Activated CD4-positive, alpha-beta memory T cell treated with anti-CD3 and anti-CD28 coated beads for 36 hours (primary cell): ENCODE measurements at regions of chr6 and their contacts with region 1.

Region 1: DNA sequence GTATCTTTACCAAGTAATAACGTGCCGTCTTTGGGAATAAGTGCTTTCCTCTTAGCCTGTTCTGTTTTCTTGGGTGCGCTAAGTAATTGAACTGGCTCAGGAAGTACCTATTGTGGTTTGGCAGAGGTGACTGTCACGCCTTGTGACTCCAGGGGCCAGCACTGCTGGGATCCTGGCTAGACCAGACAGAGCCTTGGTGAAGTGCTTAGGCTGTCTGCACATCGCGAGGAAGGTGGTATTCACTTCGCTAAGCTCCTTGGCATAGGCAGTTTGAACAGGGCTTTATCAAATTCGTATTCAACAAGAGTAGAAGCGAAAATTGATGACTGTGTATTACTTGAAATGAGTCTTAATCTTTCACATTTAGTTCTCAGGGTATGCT is 17.6 kb downstream of the PRDM1 start:
- DNase-seq: peak; percentile 71
- H3K4me3 Mint-ChIP-seq: peak overlapping the region; percentile 91
- H3K27ac Mint-ChIP-seq: peak overlapping the region; percentile 96
- H3K4me1 Mint-ChIP-seq: peaks cover 79% of the 10 kb centered on the region
- H3K27me3 Mint-ChIP-seq: no peaks in the 10 kb centered on the region

Region 2: GRCh38 chr6:105909106-105909505 is 194.6 kb before region 1 on chr6:
- CTCF ChIA-PET with region 1: no interaction called
- POLR2A ChIA-PET with region 1: no interaction called
- intact Hi-C with region 1: no loop called
- DNase-seq: no peak
- H3K4me3 Mint-ChIP-seq: no peak overlapping the region
- H3K27ac Mint-ChIP-seq: no peak overlapping the region
- H3K4me1 Mint-ChIP-seq: no peaks in the 10 kb centered on the region
- H3K27me3 Mint-ChIP-seq: peaks cover 2% of the 10 kb centered on the region

Region 3: DNA sequence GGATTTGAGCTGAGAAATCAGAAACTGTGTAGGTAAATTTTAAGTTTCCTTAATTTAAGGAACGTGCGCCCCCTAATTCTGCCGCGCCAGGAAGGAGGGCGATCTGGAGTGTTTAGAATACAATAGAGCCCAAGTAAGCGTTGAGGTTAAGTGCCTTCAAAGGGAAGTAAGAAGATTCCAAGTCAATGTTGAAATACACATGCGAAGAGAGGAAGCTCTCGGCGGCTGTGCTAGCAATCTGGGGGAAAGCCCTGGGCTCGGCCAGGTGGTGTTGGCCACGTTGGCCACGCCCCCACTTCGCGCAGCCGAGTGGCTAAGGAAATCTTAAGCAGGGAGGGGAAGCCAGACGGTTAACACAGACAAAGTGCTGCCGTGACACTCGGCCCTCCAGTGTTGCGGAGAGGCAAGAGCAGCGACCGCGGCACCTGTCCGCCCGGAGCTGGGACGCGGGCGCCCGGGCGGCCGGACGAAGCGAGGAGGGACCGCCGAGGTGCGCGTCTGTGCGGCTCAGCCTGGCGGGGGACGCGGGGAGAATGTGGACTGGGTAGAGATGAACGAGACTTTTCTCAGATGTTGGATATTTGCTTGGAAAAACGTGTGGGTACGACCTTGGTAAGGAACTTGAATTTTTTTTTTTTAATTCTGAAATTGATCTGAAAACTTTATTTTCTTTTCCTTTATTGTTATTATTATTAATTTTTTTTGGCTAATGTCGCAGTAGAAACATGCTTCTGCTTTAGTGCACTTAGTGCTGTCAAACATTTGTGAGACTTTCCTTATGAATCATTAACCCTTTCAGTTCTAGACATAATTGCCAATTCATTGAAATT is 17.5 kb before region 1 on chr6 and contains the start of gene PRDM1:
- CTCF ChIA-PET with region 1: interaction called, 38 read pairs
- POLR2A ChIA-PET with region 1: interaction called, 236 read pairs
- intact Hi-C with region 1: loop called (anchors 1 kb)
- DNase-seq: peak; percentile 89
- H3K4me3 Mint-ChIP-seq: peak within 1 kb of the TSS; percentile 90
- H3K27ac Mint-ChIP-seq: peak within 1 kb of the TSS; percentile 94
- H3K4me1 Mint-ChIP-seq: peaks cover 73% of the 10 kb centered on the region
- H3K27me3 Mint-ChIP-seq: peaks cover 2% of the 10 kb centered on the region
- total RNA-seq, gene PRDM1: 70.9 to 78.9 TPM

Region 4: DNA sequence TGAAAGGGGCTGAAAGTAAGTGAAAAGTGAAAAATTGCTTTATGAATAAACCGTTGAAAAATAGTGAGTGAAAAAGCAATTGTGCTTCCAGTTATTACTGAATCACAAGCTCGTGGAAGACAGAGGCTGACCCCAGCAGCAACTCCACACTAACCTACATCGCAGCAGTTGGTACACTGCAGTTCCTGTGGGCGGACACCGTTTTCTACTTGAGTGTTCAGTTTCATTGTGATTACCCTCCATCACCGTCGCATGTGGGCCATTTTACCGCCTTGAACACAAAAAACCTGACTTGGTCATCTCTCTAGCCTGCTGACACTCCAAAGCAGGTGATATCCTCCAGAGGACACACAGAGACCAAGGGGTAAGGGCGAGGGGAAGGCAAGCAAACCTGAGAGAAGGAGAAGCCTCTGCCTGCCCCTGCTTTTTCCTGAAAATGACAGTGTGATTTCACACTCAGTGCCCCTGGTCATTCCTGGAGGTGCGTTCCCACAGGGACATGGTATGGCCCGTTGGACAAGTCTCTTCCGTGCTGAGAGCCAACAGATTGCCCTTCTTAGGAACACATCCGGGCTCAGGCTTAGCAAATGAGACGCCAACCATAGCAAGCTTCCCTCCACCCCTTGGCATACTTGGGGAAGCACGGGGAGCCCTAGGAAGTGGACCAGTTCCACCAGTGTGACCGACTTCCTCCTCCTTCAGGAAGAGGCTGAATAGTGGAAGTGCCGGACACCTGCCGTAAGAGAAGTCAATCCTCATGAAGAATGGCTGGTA is 11.0 kb after region 1 on chr6:
- CTCF ChIA-PET with region 1: interaction called, 9 read pairs
- POLR2A ChIA-PET with region 1: interaction called, 25 read pairs
- intact Hi-C with region 1: loop called (anchors 1 kb)
- DNase-seq: peak; percentile 92
- H3K4me3 Mint-ChIP-seq: peak overlapping the region; percentile 25
- H3K27ac Mint-ChIP-seq: peak overlapping the region; percentile 75
- H3K4me1 Mint-ChIP-seq: peaks cover 92% of the 10 kb centered on the region
- H3K27me3 Mint-ChIP-seq: peaks cover 8% of the 10 kb centered on the region

Region 5: DNA sequence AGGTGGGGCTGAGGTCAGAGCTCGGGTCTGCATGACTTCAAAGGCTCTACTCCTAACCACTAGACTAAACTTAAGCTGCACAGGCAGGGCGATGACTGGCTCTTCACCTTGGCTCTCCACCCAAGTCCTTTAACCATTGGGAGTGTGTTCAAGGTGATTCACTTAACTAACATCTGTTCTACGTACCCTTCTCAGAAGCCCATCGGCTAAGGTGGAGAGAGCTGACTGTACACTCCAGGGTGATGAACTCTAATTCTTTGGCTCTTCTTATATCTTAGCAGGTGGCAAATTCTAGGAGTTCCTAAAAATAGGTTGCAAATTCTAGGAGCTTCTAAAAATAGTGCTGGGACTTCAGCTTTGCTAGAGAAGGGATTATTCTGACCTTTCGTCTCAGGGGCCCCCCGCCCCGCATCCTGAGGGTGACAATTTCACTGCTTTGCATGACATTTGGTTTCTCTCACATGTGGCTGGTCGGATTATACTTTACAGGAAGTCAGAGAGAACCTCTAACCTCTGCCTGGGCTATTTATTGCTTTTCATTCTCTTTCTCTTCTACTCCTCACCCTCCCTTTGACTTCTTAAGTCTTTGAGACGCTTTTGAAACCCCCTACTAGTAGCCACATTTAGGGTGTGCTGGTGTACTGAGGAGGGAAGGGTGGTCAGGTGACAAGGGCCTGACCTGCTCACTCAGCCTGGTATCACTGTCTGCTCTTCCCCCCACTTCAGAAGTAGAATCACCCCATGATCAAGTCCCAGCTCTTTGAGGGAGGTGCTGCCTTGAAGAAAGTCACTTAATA is 37.9 kb after region 1 on chr6:
- CTCF ChIA-PET with region 1: interaction called, 3 read pairs
- POLR2A ChIA-PET with region 1: interaction called, 3 read pairs
- intact Hi-C with region 1: loop called (anchors 1 kb)
- DNase-seq: peak; percentile 80
- H3K4me3 Mint-ChIP-seq: peak overlapping the region; percentile 10
- H3K27ac Mint-ChIP-seq: peak overlapping the region; percentile 83
- H3K4me1 Mint-ChIP-seq: peaks cover 49% of the 10 kb centered on the region
- H3K27me3 Mint-ChIP-seq: no peaks in the 10 kb centered on the region

Region 6: GRCh38 chr6:106187424-106187982 is 83.8 kb after region 1 on chr6:
- CTCF ChIA-PET with region 1: interaction called, 10 read pairs
- POLR2A ChIA-PET with region 1: interaction called, 68 read pairs
- intact Hi-C with region 1: loop called (anchors 1 kb)
- DNase-seq: no peak
- H3K4me3 Mint-ChIP-seq: no peak overlapping the region
- H3K27ac Mint-ChIP-seq: peak overlapping the region; percentile 53
- H3K4me1 Mint-ChIP-seq: peaks cover 70% of the 10 kb centered on the region
- H3K27me3 Mint-ChIP-seq: no peaks in the 10 kb centered on the region

Region 7: DNA sequence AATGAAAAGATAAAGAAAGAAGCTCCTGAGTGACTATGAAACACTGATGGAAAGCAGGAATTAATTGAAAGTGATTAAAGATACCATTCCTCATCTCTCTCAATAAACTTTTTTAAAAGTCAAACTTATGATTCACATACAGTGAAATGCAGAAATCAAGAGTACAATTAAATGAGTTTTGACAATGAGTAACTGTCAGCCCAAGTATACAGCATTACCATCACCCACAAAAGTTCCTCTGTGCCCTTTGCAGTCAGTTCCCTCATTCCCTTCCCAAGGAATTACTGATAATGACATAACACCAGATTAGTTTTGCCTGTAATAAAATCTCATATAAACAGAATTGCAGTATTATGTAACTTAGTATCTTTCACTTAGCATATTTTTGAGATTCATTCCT is 177.4 kb after region 1 on chr6:
- CTCF ChIA-PET with region 1: no interaction called
- POLR2A ChIA-PET with region 1: no interaction called
- intact Hi-C with region 1: loop called (anchors 5 kb)
- DNase-seq: no peak
- H3K4me3 Mint-ChIP-seq: no peak overlapping the region
- H3K27ac Mint-ChIP-seq: no peak overlapping the region
- H3K4me1 Mint-ChIP-seq: peaks cover 34% of the 10 kb centered on the region
- H3K27me3 Mint-ChIP-seq: no peaks in the 10 kb centered on the region